Activated CD8-positive, alpha-beta T cell treated with anti-CD3 and anti-CD28 coated beads, Interleukin-2, amount 10 ng/mL, durations not matched to agents 7 days and 5 days (primary cell): ENCODE measurements at regions of chr12 and their contacts with region 1.

Region 1: DNA sequence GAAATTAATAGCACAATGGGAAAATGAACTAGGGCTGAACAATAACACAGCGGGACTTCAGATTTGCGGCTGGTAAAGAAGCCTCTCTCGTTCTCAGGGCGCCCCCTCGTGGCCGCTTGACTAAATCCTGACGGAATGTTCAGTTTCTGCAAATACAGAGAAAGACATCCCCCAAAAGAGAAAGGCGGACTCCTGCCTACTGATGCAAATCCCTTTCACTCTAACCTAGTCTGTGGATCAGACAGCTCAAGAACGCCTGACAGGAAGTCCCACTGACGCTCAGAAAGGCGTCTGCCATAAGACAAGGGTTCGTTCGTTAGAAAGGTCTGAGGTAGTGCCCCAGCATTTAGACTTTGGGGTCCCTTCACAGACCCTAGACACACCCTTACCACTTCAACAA is 2.5 kb downstream of the NUAK1 start:
- DNase-seq: peak; percentile 80
- ATAC-seq: peak; percentile 45
- H3K4me3 Mint-ChIP-seq: no peak overlapping the region
- H3K27ac Mint-ChIP-seq: no peak overlapping the region
- H3K4me1 Mint-ChIP-seq: no peaks in the 10 kb centered on the region
- H3K27me3 Mint-ChIP-seq: peaks cover 56% of the 10 kb centered on the region

Region 2: DNA sequence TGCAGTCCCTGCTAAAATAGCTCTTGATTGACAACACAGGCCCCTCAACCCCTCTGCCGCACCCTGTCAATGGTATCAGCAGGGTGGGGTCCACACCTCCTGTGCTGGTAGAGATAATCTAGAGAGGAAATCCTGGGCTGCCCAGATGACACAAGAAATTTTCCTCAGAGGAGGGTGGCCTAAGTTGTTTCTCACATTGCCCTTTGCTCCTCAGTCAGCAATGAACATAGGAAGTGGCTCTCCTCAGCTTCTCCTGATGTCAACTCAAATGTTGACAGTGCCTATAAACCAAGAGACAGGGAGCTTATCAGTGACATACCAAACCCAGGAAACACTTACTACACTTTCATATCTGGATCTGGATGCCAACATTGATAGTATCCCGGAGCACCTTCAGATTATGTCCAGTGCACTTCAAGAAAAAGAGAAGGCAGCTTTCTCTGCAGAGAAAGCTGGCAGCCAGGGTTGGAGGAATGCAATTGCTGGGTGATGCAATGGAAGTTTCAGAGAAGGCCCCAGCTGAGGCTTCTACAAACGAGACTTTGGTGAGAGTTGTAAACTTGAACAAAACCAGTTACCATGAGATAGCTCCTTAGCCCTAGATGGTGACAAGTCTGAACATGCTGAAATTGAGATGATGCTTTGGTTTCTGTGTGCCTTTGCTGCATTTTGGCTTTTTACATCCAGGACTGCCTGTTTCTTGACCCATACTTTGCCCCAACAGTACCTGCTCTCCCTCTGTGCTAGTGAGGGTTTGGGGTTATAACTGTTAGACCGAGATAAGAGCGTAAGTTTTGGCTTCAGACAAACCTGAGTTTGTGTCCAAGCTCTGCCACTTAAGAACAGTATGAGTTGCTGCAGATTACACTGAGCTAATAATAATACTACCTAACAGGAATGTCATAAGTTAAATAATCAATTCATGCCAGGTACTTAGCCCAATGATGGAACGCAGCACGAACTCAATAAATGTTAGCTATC is 181.0 kb before region 1 on chr12:
- CTCF ChIA-PET with region 1: no interaction called
- POLR2A ChIA-PET with region 1: no interaction called
- DNase-seq: no peak
- ATAC-seq: no peak
- H3K4me3 Mint-ChIP-seq: no peak overlapping the region
- H3K27ac Mint-ChIP-seq: no peak overlapping the region
- H3K4me1 Mint-ChIP-seq: no peaks in the 10 kb centered on the region
- H3K27me3 Mint-ChIP-seq: no peaks in the 10 kb centered on the region

Region 3: GRCh38 chr12:106058256-106059182 is 77.7 kb before region 1 on chr12:
- CTCF ChIA-PET with region 1: no interaction called
- POLR2A ChIA-PET with region 1: no interaction called
- DNase-seq: no peak
- ATAC-seq: no peak
- H3K4me3 Mint-ChIP-seq: no peak overlapping the region
- H3K27ac Mint-ChIP-seq: no peak overlapping the region
- H3K4me1 Mint-ChIP-seq: no peaks in the 10 kb centered on the region
- H3K27me3 Mint-ChIP-seq: no peaks in the 10 kb centered on the region

Region 4: DNA sequence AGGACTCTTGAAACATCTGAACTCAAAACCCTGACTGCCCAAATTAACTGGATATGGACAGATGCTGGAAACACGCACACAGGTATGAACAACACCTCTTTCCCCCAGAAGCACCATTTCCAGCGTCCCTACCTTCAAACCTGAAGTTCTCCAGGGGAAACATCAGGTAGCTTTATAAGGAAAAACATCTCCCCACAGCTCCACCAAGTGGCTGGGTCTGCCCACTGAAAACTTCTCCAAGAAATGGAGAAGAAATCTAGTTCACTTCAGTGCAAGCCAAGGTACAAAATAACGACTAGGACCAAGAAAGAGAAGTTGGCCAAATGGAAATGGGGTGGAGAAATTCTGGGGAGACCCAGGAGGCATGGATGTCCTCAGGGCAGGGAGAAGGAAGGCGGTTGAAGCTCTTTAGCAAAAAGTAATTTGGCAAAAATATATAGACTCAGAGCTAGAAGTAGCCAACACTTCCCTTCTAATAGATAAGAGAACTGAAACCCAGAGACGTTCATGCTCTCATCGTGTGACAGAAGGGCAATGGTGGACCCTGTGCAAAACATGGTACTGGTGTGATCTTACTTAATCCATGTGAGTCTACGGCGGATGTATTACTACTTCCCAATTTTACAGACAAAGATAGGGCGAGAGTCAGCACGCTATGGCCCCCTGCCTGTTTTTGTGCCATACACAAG is 13.0 kb after region 1 on chr12:
- CTCF ChIA-PET with region 1: interaction called, 19 read pairs
- POLR2A ChIA-PET with region 1: no interaction called
- DNase-seq: no peak
- ATAC-seq: no peak
- H3K4me3 Mint-ChIP-seq: no peak overlapping the region
- H3K27ac Mint-ChIP-seq: no peak overlapping the region
- H3K4me1 Mint-ChIP-seq: no peaks in the 10 kb centered on the region
- H3K27me3 Mint-ChIP-seq: peaks cover 19% of the 10 kb centered on the region